ENCODE measurements at regions of chr1 and their contacts with region 1.

Region 1: GRCh38 chr1:197924516-197925123 is 7.4 kb downstream of the LHX9 start:
- DNase-seq: no peak
- CTCF ChIP-seq: peak; percentile 63

Region 2: DNA sequence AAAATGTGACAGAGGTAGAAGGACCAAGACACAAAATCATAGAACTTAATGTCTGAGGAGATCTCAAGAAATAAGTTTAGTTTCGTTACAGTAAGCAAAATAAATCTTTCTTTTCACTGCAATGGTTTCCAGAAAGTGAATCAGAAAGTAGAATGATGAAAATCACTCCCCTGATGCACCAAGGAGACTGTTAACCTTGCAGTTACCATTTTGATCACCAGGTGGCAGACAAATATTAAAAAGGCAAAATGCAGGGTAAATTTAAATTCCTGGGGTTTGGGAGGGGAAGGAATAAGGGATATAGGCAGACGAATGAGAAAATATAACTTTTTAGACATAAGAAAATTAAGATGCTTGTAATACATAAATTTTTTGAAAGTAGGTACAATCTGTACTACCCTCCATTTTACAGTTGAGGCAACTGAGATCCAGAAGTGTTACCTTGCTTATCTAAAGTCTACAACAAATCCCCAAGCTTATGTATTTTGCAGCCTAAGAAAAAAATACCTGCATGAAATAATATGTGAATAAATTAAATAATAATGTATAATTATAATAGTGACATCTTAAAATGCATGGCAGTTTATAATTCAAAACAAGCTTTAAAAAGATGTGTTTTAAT is 403.4 kb before region 1 on chr1:
- CTCF ChIA-PET with region 1: interaction called, 19 read pairs
- POLR2A ChIA-PET with region 1: no interaction called
- DNase-seq: peak; percentile 18
- CTCF ChIP-seq: peak; percentile 78

Region 3: GRCh38 chr1:197526736-197527371 is 397.8 kb before region 1 on chr1:
- CTCF ChIA-PET with region 1: interaction called, 19 read pairs
- POLR2A ChIA-PET with region 1: no interaction called
- DNase-seq: peak; percentile 10
- CTCF ChIP-seq: peak; percentile 37

Region 4: GRCh38 chr1:197902454-197903195 is 22.0 kb before region 1 on chr1 and contains the start of gene C1orf53:
- CTCF ChIA-PET with region 1: interaction called, 15 read pairs
- POLR2A ChIA-PET with region 1: interaction called, 5 read pairs
- DNase-seq: peak; percentile 93
- CTCF ChIP-seq: no peak

Region 5: GRCh38 chr1:197908716-197909220 is 15.9 kb before region 1 on chr1:
- CTCF ChIA-PET with region 1: interaction called, 15 read pairs
- POLR2A ChIA-PET with region 1: no interaction called
- DNase-seq: no peak
- CTCF ChIP-seq: no peak

Region 6: GRCh38 chr1:198265073-198265661 is 340.5 kb after region 1 on chr1:
- CTCF ChIA-PET with region 1: no interaction called
- POLR2A ChIA-PET with region 1: no interaction called
- DNase-seq: no peak
- CTCF ChIP-seq: no peak

Measured in GM10248 (cell line).